CD4-positive, alpha-beta T cell (primary cell): ENCODE measurements at regions of chr12 and their contacts with region 1.

Region 1: DNA sequence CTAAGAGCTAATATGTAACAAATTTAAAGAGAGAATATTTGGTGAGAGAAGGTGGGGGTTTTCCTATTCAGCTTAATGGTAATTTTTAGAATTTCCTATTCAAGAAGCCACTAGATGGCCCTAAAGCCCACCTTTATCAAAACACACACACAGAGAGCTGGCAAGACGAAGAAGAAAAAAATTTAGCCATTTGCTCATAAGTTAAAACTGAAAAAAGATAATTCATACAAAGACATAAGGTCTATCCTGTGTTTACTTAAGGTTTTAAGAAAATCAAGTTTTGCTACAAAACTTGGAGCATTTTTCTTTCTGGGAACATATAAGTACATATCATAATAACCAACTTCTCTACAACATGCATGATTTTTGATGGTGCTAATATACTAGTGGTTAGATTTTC is 46.8 kb upstream of the PCED1B start:
- DNase-seq: peak in 7 of 14 experiments; percentile 2 to 80 (median 37)
- ATAC-seq: peak; percentile 83
- H3K4me3 ChIP-seq: no peak overlapping the region
- H3K4me3 Mint-ChIP-seq: no peak overlapping the region
- H3K27ac ChIP-seq: no peak overlapping the region
- H3K27ac Mint-ChIP-seq: no peak overlapping the region
- H3K4me1 ChIP-seq: peaks cover 2% of the 10 kb centered on the region
- H3K4me1 Mint-ChIP-seq: peaks cover 19% of the 10 kb centered on the region
- H3K27me3 ChIP-seq: no peaks in the 10 kb centered on the region
- H3K27me3 Mint-ChIP-seq: no peaks in the 10 kb centered on the region
- CTCF ChIP-seq: peak; percentile 64

Region 2: GRCh38 chr12:47190271-47190750 is 157.7 kb after region 1 on chr12:
- CTCF ChIA-PET with region 1: no interaction called
- POLR2A ChIA-PET with region 1: no interaction called
- intact Hi-C with region 1: loop called in 1 of 2 experiments (anchors 5 kb)
- DNase-seq: peak in 1 of 14 experiments; percentile 37
- ATAC-seq: no peak
- H3K4me3 ChIP-seq: no peak overlapping the region
- H3K4me3 Mint-ChIP-seq: no peak overlapping the region
- H3K27ac ChIP-seq: peak overlapping the region; percentile 14 to 16
- H3K27ac Mint-ChIP-seq: peak overlapping the region; percentile 87
- H3K4me1 ChIP-seq: peaks cover 63% of the 10 kb centered on the region
- H3K4me1 Mint-ChIP-seq: peaks cover 90% of the 10 kb centered on the region
- H3K27me3 ChIP-seq: no peaks in the 10 kb centered on the region
- H3K27me3 Mint-ChIP-seq: no peaks in the 10 kb centered on the region
- CTCF ChIP-seq: no peak

Region 3: DNA sequence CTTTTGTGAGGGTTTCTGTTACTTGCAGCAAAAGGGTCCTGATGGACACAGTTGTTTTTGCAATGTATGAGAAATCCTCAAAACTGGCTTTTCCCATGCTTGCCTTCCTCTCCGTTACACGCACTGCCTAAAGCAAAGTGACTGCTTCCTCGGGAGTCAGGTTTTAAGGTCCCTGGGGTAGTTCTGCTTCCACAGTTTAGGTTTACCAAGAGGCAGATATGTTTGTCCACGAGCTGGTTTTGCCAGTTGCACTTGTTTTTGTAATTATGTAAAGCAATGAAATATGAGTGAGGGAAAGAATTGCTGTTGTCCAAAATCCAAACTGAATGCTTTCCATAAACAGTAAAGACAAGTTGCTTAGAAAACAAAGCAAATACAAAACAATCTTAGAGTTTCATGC is 337.8 kb after region 1 on chr12:
- CTCF ChIA-PET with region 1: no interaction called
- POLR2A ChIA-PET with region 1: no interaction called
- intact Hi-C with region 1: no loop called
- DNase-seq: no peak
- ATAC-seq: no peak
- H3K4me3 ChIP-seq: no peak overlapping the region
- H3K4me3 Mint-ChIP-seq: no peak overlapping the region
- H3K27ac ChIP-seq: no peak overlapping the region
- H3K27ac Mint-ChIP-seq: no peak overlapping the region
- H3K4me1 ChIP-seq: peaks cover 35% of the 10 kb centered on the region
- H3K4me1 Mint-ChIP-seq: peaks cover 15% of the 10 kb centered on the region
- H3K27me3 ChIP-seq: no peaks in the 10 kb centered on the region
- H3K27me3 Mint-ChIP-seq: no peaks in the 10 kb centered on the region
- CTCF ChIP-seq: no peak

Region 4: GRCh38 chr12:47397664-47398281 is 365.1 kb after region 1 on chr12:
- CTCF ChIA-PET with region 1: interaction called, 11 read pairs
- POLR2A ChIA-PET with region 1: interaction called, 14 read pairs
- intact Hi-C with region 1: loop called (anchors 1 kb)
- DNase-seq: peak in 11 of 14 experiments; percentile 5 to 80 (median 33)
- ATAC-seq: peak; percentile 91
- H3K4me3 ChIP-seq: no peak overlapping the region
- H3K4me3 Mint-ChIP-seq: peak overlapping the region; percentile 49
- H3K27ac ChIP-seq: peak overlapping the region in 1 of 2 donors; percentile 23
- H3K27ac Mint-ChIP-seq: peak overlapping the region; percentile 63
- H3K4me1 ChIP-seq: peaks cover 40% of the 10 kb centered on the region
- H3K4me1 Mint-ChIP-seq: peaks cover 53% of the 10 kb centered on the region
- H3K27me3 ChIP-seq: no peaks in the 10 kb centered on the region
- H3K27me3 Mint-ChIP-seq: no peaks in the 10 kb centered on the region
- CTCF ChIP-seq: peak; percentile 66

Region 5: GRCh38 chr12:47408171-47408871 is 375.7 kb after region 1 on chr12:
- CTCF ChIA-PET with region 1: interaction called, 13 read pairs
- POLR2A ChIA-PET with region 1: interaction called, 3 read pairs
- intact Hi-C with region 1: loop called in 1 of 2 experiments (anchors 2 kb)
- DNase-seq: peak in 11 of 14 experiments; percentile 17 to 72 (median 33)
- ATAC-seq: peak; percentile 78
- H3K4me3 ChIP-seq: no peak overlapping the region
- H3K4me3 Mint-ChIP-seq: no peak overlapping the region
- H3K27ac ChIP-seq: no peak overlapping the region
- H3K27ac Mint-ChIP-seq: peak overlapping the region; percentile 90
- H3K4me1 ChIP-seq: peaks cover 36% of the 10 kb centered on the region
- H3K4me1 Mint-ChIP-seq: peaks cover 72% of the 10 kb centered on the region
- H3K27me3 ChIP-seq: no peaks in the 10 kb centered on the region
- H3K27me3 Mint-ChIP-seq: no peaks in the 10 kb centered on the region
- CTCF ChIP-seq: peak; percentile 67

Region 6: GRCh38 chr12:47651368-47652254 is 619.0 kb after region 1 on chr12:
- CTCF ChIA-PET with region 1: interaction called, 4 read pairs
- POLR2A ChIA-PET with region 1: interaction called, 3 read pairs
- intact Hi-C with region 1: loop called (anchors 10 kb)
- DNase-seq: peak; percentile 19 to 80 (median 34)
- ATAC-seq: peak; percentile 97
- H3K4me3 ChIP-seq: peak overlapping the region; percentile 3
- H3K4me3 Mint-ChIP-seq: peak overlapping the region; percentile 43
- H3K27ac ChIP-seq: no peak overlapping the region
- H3K27ac Mint-ChIP-seq: no peak overlapping the region
- H3K4me1 ChIP-seq: peaks cover 9% of the 10 kb centered on the region
- H3K4me1 Mint-ChIP-seq: peaks cover 9% of the 10 kb centered on the region
- H3K27me3 ChIP-seq: no peaks in the 10 kb centered on the region
- H3K27me3 Mint-ChIP-seq: no peaks in the 10 kb centered on the region
- CTCF ChIP-seq: peak; percentile 72

Region 7: DNA sequence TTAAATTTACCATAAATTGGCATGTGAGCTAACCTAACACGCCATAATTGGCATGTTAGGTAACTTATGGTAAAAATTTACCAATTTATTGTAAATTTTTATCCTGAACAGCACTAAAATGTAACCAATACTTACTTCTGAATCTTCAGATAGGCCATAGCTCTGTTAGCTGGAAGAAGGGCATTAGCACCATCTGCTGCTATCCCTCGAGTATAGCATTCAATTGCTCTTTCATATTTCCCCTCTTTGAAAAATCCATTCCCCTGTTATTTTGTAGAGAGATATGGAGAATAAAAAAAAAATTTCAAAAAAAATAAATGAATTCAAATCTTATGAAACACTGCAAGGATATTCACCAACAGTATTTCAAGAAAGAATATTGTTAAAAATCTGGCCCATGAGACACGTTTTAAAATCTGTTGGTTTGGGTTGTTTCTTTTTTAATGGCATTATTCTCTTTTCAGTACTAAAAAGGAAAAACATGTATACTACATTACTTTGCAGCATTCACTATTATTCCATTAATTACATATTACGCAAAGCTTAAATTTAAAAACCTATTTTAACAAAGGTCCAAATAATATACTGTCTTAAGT is 654.1 kb after region 1 on chr12:
- CTCF ChIA-PET with region 1: interaction called, 7 read pairs
- POLR2A ChIA-PET with region 1: interaction called, 10 read pairs
- intact Hi-C with region 1: loop called (anchors 1 to 2 kb)
- DNase-seq: peak in 6 of 14 experiments; percentile 1 to 61 (median 31)
- ATAC-seq: peak; percentile 76
- H3K4me3 ChIP-seq: no peak overlapping the region
- H3K4me3 Mint-ChIP-seq: no peak overlapping the region
- H3K27ac ChIP-seq: no peak overlapping the region
- H3K27ac Mint-ChIP-seq: no peak overlapping the region
- H3K4me1 ChIP-seq: no peaks in the 10 kb centered on the region
- H3K4me1 Mint-ChIP-seq: peaks cover 10% of the 10 kb centered on the region
- H3K27me3 ChIP-seq: no peaks in the 10 kb centered on the region
- H3K27me3 Mint-ChIP-seq: no peaks in the 10 kb centered on the region
- CTCF ChIP-seq: peak; percentile 58